CD4-positive, alpha-beta T cell (primary cell): ENCODE measurements at regions of chr5 and their contacts with region 1.

Region 1: GRCh38 chr5:10627160-10627701 is 63.4 kb downstream of the ANKRD33B start:
- DNase-seq: no peak
- ATAC-seq: no peak
- H3K4me3 ChIP-seq: peak overlapping the region; percentile 48
- H3K4me3 Mint-ChIP-seq: peak overlapping the region; percentile 72
- H3K27ac ChIP-seq: no peak overlapping the region
- H3K27ac Mint-ChIP-seq: no peak overlapping the region
- H3K4me1 ChIP-seq: peaks cover 21% of the 10 kb centered on the region
- H3K4me1 Mint-ChIP-seq: peaks cover 24% of the 10 kb centered on the region
- H3K27me3 ChIP-seq: no peaks in the 10 kb centered on the region
- H3K27me3 Mint-ChIP-seq: no peaks in the 10 kb centered on the region
- CTCF ChIP-seq: no peak

Region 2: DNA sequence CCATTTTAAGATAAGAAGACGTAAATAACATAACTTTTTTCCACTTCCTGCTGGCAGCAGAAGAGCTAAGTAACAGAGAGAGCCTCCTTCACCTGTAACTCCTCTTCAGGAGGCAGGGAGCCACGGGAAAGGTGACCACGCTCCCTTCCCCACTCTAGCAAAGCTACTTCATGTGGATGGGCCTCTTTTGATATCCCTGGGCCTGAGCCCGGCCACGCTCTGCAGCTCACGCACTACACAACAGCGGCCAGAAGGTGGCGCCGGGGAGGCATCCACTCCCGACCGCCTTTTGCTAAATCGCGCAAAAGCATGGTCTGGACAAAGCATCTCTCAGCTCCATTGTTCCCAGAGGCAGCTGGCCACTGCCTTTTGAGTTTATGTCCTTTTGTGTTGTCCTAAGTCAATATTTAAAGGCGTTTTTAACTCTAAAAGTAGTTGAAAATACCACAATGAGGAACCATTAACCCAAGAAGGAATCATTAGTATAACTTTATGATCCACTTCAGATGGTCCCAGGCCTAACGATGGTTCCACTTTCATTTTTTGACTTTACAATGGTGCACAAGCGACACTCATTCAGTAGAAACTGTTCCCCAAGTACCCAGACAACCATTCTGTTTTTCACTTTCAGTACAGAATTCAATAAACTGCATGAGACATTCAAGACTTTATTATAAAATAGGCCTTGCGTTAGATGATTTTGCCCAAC is 343.1 kb before region 1 on chr5:
- CTCF ChIA-PET with region 1: interaction called, 12 read pairs
- POLR2A ChIA-PET with region 1: interaction called, 8 read pairs
- intact Hi-C with region 1: loop called in 1 of 2 experiments (anchors 1 kb)
- DNase-seq: peak; percentile 56 to 85 (median 72)
- ATAC-seq: peak; percentile 97
- H3K4me3 ChIP-seq: no peak overlapping the region
- H3K4me3 Mint-ChIP-seq: no peak overlapping the region
- H3K27ac ChIP-seq: no peak overlapping the region
- H3K27ac Mint-ChIP-seq: no peak overlapping the region
- H3K4me1 ChIP-seq: peaks cover 14% of the 10 kb centered on the region
- H3K4me1 Mint-ChIP-seq: no peaks in the 10 kb centered on the region
- H3K27me3 ChIP-seq: no peaks in the 10 kb centered on the region
- H3K27me3 Mint-ChIP-seq: no peaks in the 10 kb centered on the region
- CTCF ChIP-seq: peak; percentile 99

Region 3: DNA sequence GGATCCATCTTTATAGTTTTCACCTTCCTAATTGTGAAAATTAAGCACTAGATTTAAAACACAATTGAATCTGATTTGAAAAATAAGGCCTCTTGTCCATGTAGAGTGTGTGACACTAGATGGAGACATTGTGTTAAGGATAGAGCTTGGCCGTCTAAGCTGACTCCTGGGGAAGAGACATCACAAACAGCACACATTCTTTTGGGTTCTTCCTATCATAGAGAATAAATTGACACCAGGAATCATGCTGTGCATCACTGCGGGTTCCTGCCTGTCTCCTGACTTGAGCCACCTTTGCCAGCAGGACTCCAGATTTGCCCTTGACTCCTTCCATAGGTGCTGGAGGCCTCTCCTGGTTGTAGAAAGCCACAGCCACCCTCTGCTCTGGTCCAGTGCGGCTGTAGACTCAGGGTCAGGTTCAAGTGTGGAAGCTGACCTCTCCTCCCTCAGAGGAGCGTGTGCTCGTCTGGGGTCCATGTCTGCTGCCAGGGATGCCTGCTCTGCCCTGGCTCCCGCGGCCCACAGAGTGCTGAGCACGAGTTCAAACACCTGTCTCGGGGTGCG is 174.4 kb before region 1 on chr5:
- CTCF ChIA-PET with region 1: interaction called, 37 read pairs
- POLR2A ChIA-PET with region 1: interaction called, 6 read pairs
- intact Hi-C with region 1: loop called (anchors 1 kb)
- DNase-seq: peak in 4 of 14 experiments; percentile 23 to 79 (median 76)
- ATAC-seq: peak; percentile 67
- H3K4me3 ChIP-seq: no peak overlapping the region
- H3K4me3 Mint-ChIP-seq: no peak overlapping the region
- H3K27ac ChIP-seq: no peak overlapping the region
- H3K27ac Mint-ChIP-seq: no peak overlapping the region
- H3K4me1 ChIP-seq: peaks cover 3% of the 10 kb centered on the region
- H3K4me1 Mint-ChIP-seq: peaks cover 12% of the 10 kb centered on the region
- H3K27me3 ChIP-seq: no peaks in the 10 kb centered on the region
- H3K27me3 Mint-ChIP-seq: no peaks in the 10 kb centered on the region
- CTCF ChIP-seq: peak; percentile 59

Region 4: DNA sequence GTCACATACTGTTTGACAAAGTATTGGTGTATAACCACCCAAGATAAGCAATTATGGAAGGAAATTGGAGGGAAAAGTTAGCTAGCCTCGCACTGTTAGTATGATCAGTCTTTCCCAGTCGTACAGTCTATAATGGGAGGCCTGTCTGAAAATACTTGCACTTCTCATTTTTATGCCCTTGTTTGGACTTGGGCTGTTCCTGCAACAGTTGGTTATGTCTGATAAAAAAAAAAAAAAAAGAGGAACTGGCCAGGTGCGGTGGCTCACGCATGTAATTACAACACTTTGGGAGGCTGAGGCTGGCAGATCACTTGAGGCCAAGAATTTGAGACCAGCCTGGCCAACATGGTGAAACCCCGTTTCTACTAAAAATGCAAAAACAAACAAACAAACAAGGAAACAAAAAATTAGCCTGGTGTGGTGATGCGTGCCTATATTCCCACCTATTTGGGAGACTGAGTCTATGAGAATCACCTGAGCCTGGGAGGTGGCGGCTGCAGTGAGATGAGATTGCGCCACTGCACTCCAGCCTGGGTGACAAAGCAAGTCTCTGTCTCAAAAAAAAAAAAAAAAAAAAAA is 121.6 kb before region 1 on chr5:
- CTCF ChIA-PET with region 1: no interaction called
- POLR2A ChIA-PET with region 1: no interaction called
- intact Hi-C with region 1: no loop called
- DNase-seq: peak in 2 of 14 experiments; percentile 5 to 7
- ATAC-seq: no peak
- H3K4me3 ChIP-seq: no peak overlapping the region
- H3K4me3 Mint-ChIP-seq: no peak overlapping the region
- H3K27ac ChIP-seq: no peak overlapping the region
- H3K27ac Mint-ChIP-seq: no peak overlapping the region
- H3K4me1 ChIP-seq: no peaks in the 10 kb centered on the region
- H3K4me1 Mint-ChIP-seq: no peaks in the 10 kb centered on the region
- H3K27me3 ChIP-seq: no peaks in the 10 kb centered on the region
- H3K27me3 Mint-ChIP-seq: no peaks in the 10 kb centered on the region
- CTCF ChIP-seq: no peak

Region 5: GRCh38 chr5:10563945-10564837 is 63.0 kb before region 1 on chr5 and contains the start of gene ANKRD33B:
- CTCF ChIA-PET with region 1: no interaction called
- POLR2A ChIA-PET with region 1: no interaction called
- intact Hi-C with region 1: loop called in 1 of 2 experiments (anchors 5 kb)
- DNase-seq: peak; percentile 49 to 89 (median 70)
- ATAC-seq: peak; percentile 81
- H3K4me3 ChIP-seq: peak within 1 kb of the TSS; percentile 63
- H3K4me3 Mint-ChIP-seq: peak within 1 kb of the TSS; percentile 87
- H3K27ac ChIP-seq: no peak within 1 kb of the TSS
- H3K27ac Mint-ChIP-seq: no peak within 1 kb of the TSS
- H3K4me1 ChIP-seq: peaks cover 40% of the 10 kb centered on the region
- H3K4me1 Mint-ChIP-seq: peaks cover 13% of the 10 kb centered on the region
- H3K27me3 ChIP-seq: peaks cover 0 to 11% of the 10 kb centered on the region in 2 experiments
- H3K27me3 Mint-ChIP-seq: peaks cover 5% of the 10 kb centered on the region
- CTCF ChIP-seq: no peak
- total RNA-seq, gene ANKRD33B: 0.99 to 1.3 TPM